MCF 10A (cell line): ENCODE measurements at regions of chr20 and their contacts with region 1.

Region 1: GRCh38 chr20:19964289-19965263 is 52.6 kb upstream of the NAA20 start:
- DNase-seq: peak; percentile 80
- H3K4me3 Mint-ChIP-seq: no peak overlapping the region
- H3K27ac Mint-ChIP-seq: peak overlapping the region; percentile 87
- H3K4me1 Mint-ChIP-seq: peaks cover 15% of the 10 kb centered on the region
- H3K27me3 Mint-ChIP-seq: no peaks in the 10 kb centered on the region
- CTCF ChIP-seq: no peak

Region 2: GRCh38 chr20:19815553-19815991 is 149.0 kb before region 1 on chr20:
- CTCF ChIA-PET with region 1: no interaction called
- POLR2A ChIA-PET with region 1: interaction called, 10 read pairs
- intact Hi-C with region 1: no loop called
- DNase-seq: peak; percentile 95
- H3K4me3 Mint-ChIP-seq: peak overlapping the region; percentile 44
- H3K27ac Mint-ChIP-seq: peak overlapping the region; percentile 90
- H3K4me1 Mint-ChIP-seq: peaks cover 20% of the 10 kb centered on the region
- H3K27me3 Mint-ChIP-seq: no peaks in the 10 kb centered on the region
- CTCF ChIP-seq: no peak

Region 3: GRCh38 chr20:20010639-20011500 is 46.3 kb after region 1 on chr20:
- CTCF ChIA-PET with region 1: no interaction called
- POLR2A ChIA-PET with region 1: no interaction called
- intact Hi-C with region 1: no loop called
- DNase-seq: peak; percentile 33
- H3K4me3 Mint-ChIP-seq: no peak overlapping the region
- H3K27ac Mint-ChIP-seq: peak overlapping the region; percentile 44
- H3K4me1 Mint-ChIP-seq: peaks cover 5% of the 10 kb centered on the region
- H3K27me3 Mint-ChIP-seq: no peaks in the 10 kb centered on the region
- CTCF ChIP-seq: no peak